Left cardiac atrium (tissue), 4 donors: ENCODE measurements at regions of chr1 and their contacts with region 1.

Region 1: GRCh38 chr1:70134148-70134547 is 71.2 kb downstream of the LRRC40 start:
- DNase-seq: no peak
- ATAC-seq: peak; percentile 59 to 72

Region 2: GRCh38 chr1:70290218-70290617 is 156.1 kb after region 1 on chr1:
- intact Hi-C with region 1: no loop called
- DNase-seq: no peak
- ATAC-seq: no peak

Region 3: GRCh38 chr1:70509996-70510876 is 376.1 kb after region 1 on chr1:
- intact Hi-C with region 1: loop called in 1 of 2 experiments (anchors 2 kb)
- DNase-seq: no peak
- ATAC-seq: peak; percentile 87

Region 4: GRCh38 chr1:70528590-70529333 is 394.6 kb after region 1 on chr1:
- intact Hi-C with region 1: no loop called
- DNase-seq: no peak
- ATAC-seq: peak; percentile 61 to 73